ENCODE measurements at regions of chr20 and their contacts with region 1.

Region 1: GRCh38 chr20:62010551-62011402 is 54.9 kb downstream of the TAF4 start:
- DNase-seq: no peak
- H3K4me3 ChIP-seq: no peak overlapping the region
- H3K27ac ChIP-seq: no peak overlapping the region
- H3K4me1 ChIP-seq: peaks cover 0 to 21% (median 0%) of the 10 kb centered on the region in 3 donors
- H3K27me3 ChIP-seq: no peaks in the 10 kb centered on the region
- CTCF ChIP-seq: peak; percentile 54 to 80 (median 63)
- POLR2A ChIP-seq: no peak

Region 2: DNA sequence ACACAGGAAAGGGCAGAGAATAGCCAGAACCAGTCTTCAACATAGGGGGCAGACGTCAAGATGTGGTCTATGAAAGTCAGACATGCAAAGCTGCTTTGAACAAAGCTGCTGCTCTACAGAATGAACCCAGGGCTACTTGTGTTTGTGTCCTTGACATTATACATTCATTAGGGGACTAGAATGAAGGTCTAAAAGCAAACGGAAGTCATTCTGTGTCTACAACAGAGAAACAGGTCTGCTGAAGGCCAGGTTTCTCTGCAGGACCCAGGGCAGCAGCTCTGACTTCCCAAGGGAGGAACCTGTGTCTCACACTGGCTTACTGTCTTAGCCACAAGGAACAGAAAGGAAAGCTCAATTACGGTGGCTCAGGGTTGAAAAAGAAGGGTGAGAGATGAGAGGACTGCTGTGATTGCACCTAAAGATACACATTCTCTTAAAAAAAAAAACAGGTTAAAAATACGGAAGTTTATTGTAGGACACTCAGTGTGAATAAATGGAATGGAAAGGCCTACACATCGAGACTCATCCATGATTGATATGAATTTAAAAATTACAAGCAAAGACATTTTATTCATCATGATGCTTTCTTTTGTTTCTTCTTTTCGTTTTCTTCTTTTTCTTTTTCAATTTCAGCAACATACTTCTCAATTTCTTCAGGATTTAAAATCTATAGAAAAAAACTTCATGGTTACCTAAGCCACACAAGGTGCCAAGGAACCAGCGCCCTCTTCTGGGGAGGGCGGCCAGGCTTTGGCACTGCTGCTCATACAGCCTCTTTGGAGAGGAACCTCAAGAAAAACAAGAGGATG is 125.7 kb after region 1 on chr20:
- intact Hi-C with region 1: loop called (anchors 5 kb)
- DNase-seq: no peak
- H3K4me3 ChIP-seq: no peak overlapping the region
- H3K27ac ChIP-seq: no peak overlapping the region
- H3K4me1 ChIP-seq: peaks cover 9 to 54% (median 16%) of the 10 kb centered on the region in 3 donors
- H3K27me3 ChIP-seq: no peaks in the 10 kb centered on the region
- CTCF ChIP-seq: peak; percentile 65 to 79 (median 76)
- POLR2A ChIP-seq: no peak

Measured in esophagus squamous epithelium (tissue), 5 donors.